ENCODE measurements at regions of chr5 and their contacts with region 1.

Region 1: GRCh38 chr5:149345147-149345875 is at the start of gene GRPEL2:
- DNase-seq: peak; percentile 87
- ATAC-seq: peak; percentile 96
- H3K4me3 ChIP-seq: peak within 1 kb of the TSS; percentile 97
- H3K27ac ChIP-seq: peak within 1 kb of the TSS; percentile 84
- H3K4me1 ChIP-seq: no peaks in the 10 kb centered on the region
- H3K27me3 ChIP-seq: no peaks in the 10 kb centered on the region
- CTCF ChIP-seq: 0 out of 6 replicates have a peak, but pooled peaks of 1 of the 3 experiments have one; percentile 6
- EP300 ChIP-seq: no peak
- POLR2A ChIP-seq: peak; percentile 97
- RAD21 ChIP-seq: no peak
- polyA plus RNA-seq, gene GRPEL2: 4.4 to 7.6 TPM

Region 2: DNA sequence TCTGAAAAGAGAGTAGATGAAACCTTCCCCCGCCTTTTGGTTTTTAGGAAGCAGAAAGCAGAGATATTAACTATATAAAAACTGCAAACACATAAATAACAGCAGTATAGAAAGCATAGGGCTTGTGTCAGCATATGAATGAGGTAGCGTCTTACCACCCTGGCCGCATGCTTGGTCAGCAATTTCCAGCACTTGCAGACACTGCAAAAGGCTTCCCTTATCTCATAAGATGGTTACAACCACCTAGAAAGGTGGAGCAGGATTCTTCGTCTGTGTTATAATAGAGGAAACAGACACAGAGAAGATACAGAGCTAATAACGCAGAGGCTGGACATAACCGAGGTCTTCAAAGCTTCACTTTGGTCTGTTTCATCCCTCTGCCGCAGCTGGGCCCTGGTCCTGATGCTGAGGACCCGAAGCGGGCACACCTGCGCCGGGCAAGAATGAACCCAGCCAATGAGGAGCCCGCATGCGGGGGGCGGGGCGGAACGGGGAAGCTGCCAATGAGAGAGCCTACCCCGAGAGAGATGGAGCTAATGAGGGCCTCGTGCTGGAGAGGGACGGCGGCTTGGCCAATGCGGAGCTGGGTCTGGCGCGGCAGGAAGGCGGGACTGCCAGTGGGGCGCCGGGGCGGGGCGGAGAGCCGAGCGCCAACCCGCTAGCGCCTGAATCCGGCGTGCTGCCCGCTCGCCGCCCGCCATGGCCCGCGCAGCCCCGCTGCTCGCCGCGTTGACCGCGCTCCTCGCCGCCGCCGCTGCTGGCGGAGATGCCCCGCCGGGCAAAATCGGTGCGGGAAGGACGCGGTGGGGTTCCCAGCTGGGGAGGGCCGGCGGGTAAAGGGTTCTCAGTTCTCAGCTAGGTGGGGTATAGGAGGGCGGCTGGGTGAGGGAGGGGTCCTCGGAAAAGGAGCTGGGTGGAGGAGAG is 12.3 kb after region 1 on chr5 and contains the start of gene PCYOX1L:
- CTCF ChIA-PET with region 1: interaction called, 9 read pairs
- POLR2A ChIA-PET with region 1: interaction called, 66 read pairs
- RAD21 ChIA-PET with region 1: interaction called, 30 read pairs
- SMC1A ChIA-PET with region 1: interaction called, 23 read pairs
- in situ Hi-C with region 1: no loop called
- intact Hi-C with region 1: loop called (anchors 1 kb)
- DNase-seq: peak; percentile 82
- ATAC-seq: peak; percentile 100
- H3K4me3 ChIP-seq: peak within 1 kb of the TSS; percentile 84
- H3K27ac ChIP-seq: peak within 1 kb of the TSS; percentile 48
- H3K4me1 ChIP-seq: peaks cover 13% of the 10 kb centered on the region
- H3K27me3 ChIP-seq: no peaks in the 10 kb centered on the region
- CTCF ChIP-seq: no peak
- EP300 ChIP-seq: no peak
- POLR2A ChIP-seq: peak; percentile 87
- RAD21 ChIP-seq: no peak
- polyA plus RNA-seq, gene PCYOX1L: 2.9 to 5.4 TPM

Region 3: GRCh38 chr5:149406203-149406978 is 61.1 kb after region 1 on chr5:
- CTCF ChIA-PET with region 1: no interaction called
- POLR2A ChIA-PET with region 1: no interaction called
- RAD21 ChIA-PET with region 1: no interaction called
- SMC1A ChIA-PET with region 1: no interaction called
- in situ Hi-C with region 1: no loop called
- intact Hi-C with region 1: no loop called
- DNase-seq: no peak
- ATAC-seq: peak; percentile 50
- H3K4me3 ChIP-seq: no peak overlapping the region
- H3K27ac ChIP-seq: no peak overlapping the region
- H3K4me1 ChIP-seq: no peaks in the 10 kb centered on the region
- H3K27me3 ChIP-seq: peaks cover 0 to 2% of the 10 kb centered on the region in 2 experiments; a peak in 2 of 4 replicates
- CTCF ChIP-seq: no peak
- EP300 ChIP-seq: no peak
- POLR2A ChIP-seq: no peak
- RAD21 ChIP-seq: no peak

Region 4: GRCh38 chr5:149551200-149552037 is 206.1 kb after region 1 on chr5 and contains the start of gene CSNK1A1:
- CTCF ChIA-PET with region 1: interaction called, 4 read pairs
- POLR2A ChIA-PET with region 1: interaction called, 8 read pairs
- RAD21 ChIA-PET with region 1: interaction called, 4 read pairs
- SMC1A ChIA-PET with region 1: interaction called, 5 read pairs
- in situ Hi-C with region 1: no loop called
- intact Hi-C with region 1: loop called (anchors 2 kb)
- DNase-seq: peak; percentile 98
- ATAC-seq: peak; percentile 91
- H3K4me3 ChIP-seq: peak within 1 kb of the TSS; percentile 82
- H3K27ac ChIP-seq: peak within 1 kb of the TSS; percentile 100
- H3K4me1 ChIP-seq: no peaks in the 10 kb centered on the region; the same call in 1 of the 2 replicates
- H3K27me3 ChIP-seq: no peaks in the 10 kb centered on the region
- CTCF ChIP-seq: peak; percentile 58 to 77 (median 69)
- EP300 ChIP-seq: 0 out of 4 replicates have a peak, but pooled peaks of 1 of the 2 experiments have one; percentile 23
- POLR2A ChIP-seq: peak; percentile 94
- RAD21 ChIP-seq: peak; percentile 51
- polyA plus RNA-seq, gene CSNK1A1: 53.3 to 62.0 TPM

Measured in GM12878 (cell line).